Endothelial cell of umbilical vein (primary cell): ENCODE measurements at regions of chr9 and their contacts with region 1.

Region 1: DNA sequence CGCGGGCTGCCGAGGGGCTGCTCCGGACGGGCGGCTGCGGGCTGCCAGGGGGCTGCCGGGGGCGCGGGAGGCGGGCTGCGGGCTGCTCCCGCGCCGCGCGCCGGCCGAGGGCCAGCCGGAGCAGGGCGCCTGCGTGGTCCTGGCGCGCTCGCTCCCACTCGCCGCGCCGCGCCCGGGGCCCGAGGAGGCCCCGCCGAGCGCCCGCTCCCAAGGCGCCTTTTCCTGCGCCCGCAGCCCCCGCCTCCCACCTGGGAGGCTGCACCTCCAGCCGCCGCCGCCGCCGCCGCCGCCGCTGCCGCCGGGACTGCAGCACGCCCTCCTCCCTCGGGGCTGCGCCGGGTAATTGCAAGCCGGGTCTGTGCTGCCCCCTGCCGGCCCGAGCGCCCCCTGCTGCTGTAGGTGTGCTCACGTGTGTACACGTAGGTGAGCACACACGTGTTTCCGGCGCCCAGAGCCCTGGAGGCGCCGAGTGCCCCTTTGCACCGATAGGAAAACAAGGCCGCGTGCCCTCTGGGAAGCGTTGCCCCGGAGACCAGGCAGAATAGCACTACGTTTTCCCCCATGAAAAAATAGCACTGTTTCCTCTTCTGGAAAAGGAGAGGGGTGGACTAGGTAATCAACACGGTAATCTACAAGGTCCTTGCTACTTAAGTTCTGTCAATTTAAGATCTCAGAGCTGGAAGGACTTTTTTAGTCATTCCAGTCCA is at the start of gene EPB41L4B:
- DNase-seq: peak; percentile 79
- H3K4me3 ChIP-seq: peak within 1 kb of the TSS in 1 of 3 experiments; percentile 19
- H3K27ac ChIP-seq: no peak within 1 kb of the TSS
- H3K4me1 ChIP-seq: peaks cover 2% of the 10 kb centered on the region
- H3K27me3 ChIP-seq: peaks cover 28 to 32% of the 10 kb centered on the region in 2 experiments
- CTCF ChIP-seq: peak; percentile 86 to 93
- POLR2A ChIP-seq: no peak
- total RNA-seq, gene EPB41L4B: 0.15 and 0.23 TPM in 2 replicates

Region 2: GRCh38 chr9:108850293-108850897 is 470.5 kb before region 1 on chr9:
- CTCF ChIA-PET with region 1: no interaction called
- POLR2A ChIA-PET with region 1: no interaction called
- dilution Hi-C with region 1: no loop called
- intact Hi-C with region 1: loop called (anchors 1 kb)
- DNase-seq: peak; percentile 34
- H3K4me3 ChIP-seq: no peak overlapping the region
- H3K27ac ChIP-seq: no peak overlapping the region
- H3K4me1 ChIP-seq: no peaks in the 10 kb centered on the region
- H3K27me3 ChIP-seq: peaks cover 0 to 2% of the 10 kb centered on the region in 2 experiments
- CTCF ChIP-seq: peak in 1 of 2 donors; percentile 28
- POLR2A ChIP-seq: no peak

Region 3: GRCh38 chr9:108933718-108934322 is 387.1 kb before region 1 on chr9 and contains the start of gene ELP1:
- CTCF ChIA-PET with region 1: no interaction called
- POLR2A ChIA-PET with region 1: no interaction called
- dilution Hi-C with region 1: no loop called
- intact Hi-C with region 1: loop called (anchors 10 kb)
- DNase-seq: peak; percentile 94
- H3K4me3 ChIP-seq: peak within 1 kb of the TSS; percentile 11 to 74 (median 66)
- H3K27ac ChIP-seq: peak within 1 kb of the TSS; percentile 47
- H3K4me1 ChIP-seq: peaks cover 10% of the 10 kb centered on the region
- H3K27me3 ChIP-seq: no peaks in the 10 kb centered on the region
- CTCF ChIP-seq: peak; percentile 12 to 46
- POLR2A ChIP-seq: no peak
- total RNA-seq, gene ELP1: 21.4 and 21.8 TPM in 2 replicates

Region 4: GRCh38 chr9:109012876-109013678 is 307.8 kb before region 1 on chr9 and contains the start of gene CTNNAL1:
- CTCF ChIA-PET with region 1: no interaction called
- POLR2A ChIA-PET with region 1: interaction called, 3 read pairs
- dilution Hi-C with region 1: no loop called
- intact Hi-C with region 1: loop called (anchors 2 kb)
- DNase-seq: peak; percentile 92
- H3K4me3 ChIP-seq: peak within 1 kb of the TSS; percentile 68 to 81 (median 68)
- H3K27ac ChIP-seq: peak within 1 kb of the TSS; percentile 77
- H3K4me1 ChIP-seq: peaks cover 35% of the 10 kb centered on the region
- H3K27me3 ChIP-seq: no peaks in the 10 kb centered on the region
- CTCF ChIP-seq: no peak
- POLR2A ChIP-seq: peak; percentile 92
- total RNA-seq, gene CTNNAL1: 72.0 and 76.2 TPM in 2 replicates

Region 5: GRCh38 chr9:109119439-109120203 is 201.3 kb before region 1 on chr9 and contains the start of gene TMEM245:
- CTCF ChIA-PET with region 1: no interaction called
- POLR2A ChIA-PET with region 1: no interaction called
- dilution Hi-C with region 1: no loop called
- intact Hi-C with region 1: loop called (anchors 1 kb)
- DNase-seq: peak; percentile 98
- H3K4me3 ChIP-seq: peak within 1 kb of the TSS; percentile 61 to 75 (median 74)
- H3K27ac ChIP-seq: peak within 1 kb of the TSS; percentile 42
- H3K4me1 ChIP-seq: peaks cover 16% of the 10 kb centered on the region
- H3K27me3 ChIP-seq: no peaks in the 10 kb centered on the region
- CTCF ChIP-seq: no peak
- POLR2A ChIP-seq: peak; percentile 75
- total RNA-seq, gene TMEM245: 39.4 and 44.2 TPM in 2 replicates

Region 6: GRCh38 chr9:109244157-109245132 is 76.5 kb before region 1 on chr9:
- CTCF ChIA-PET with region 1: interaction called, 5 read pairs
- POLR2A ChIA-PET with region 1: no interaction called
- dilution Hi-C with region 1: no loop called
- intact Hi-C with region 1: loop called (anchors 1 kb)
- DNase-seq: peak; percentile 75
- H3K4me3 ChIP-seq: no peak overlapping the region
- H3K27ac ChIP-seq: no peak overlapping the region
- H3K4me1 ChIP-seq: peaks cover 13% of the 10 kb centered on the region
- H3K27me3 ChIP-seq: no peaks in the 10 kb centered on the region
- CTCF ChIP-seq: peak; percentile 87 to 97
- POLR2A ChIP-seq: no peak